GM12878 (cell line): ENCODE measurements at regions of chr7 and their contacts with region 1.

Region 1: DNA sequence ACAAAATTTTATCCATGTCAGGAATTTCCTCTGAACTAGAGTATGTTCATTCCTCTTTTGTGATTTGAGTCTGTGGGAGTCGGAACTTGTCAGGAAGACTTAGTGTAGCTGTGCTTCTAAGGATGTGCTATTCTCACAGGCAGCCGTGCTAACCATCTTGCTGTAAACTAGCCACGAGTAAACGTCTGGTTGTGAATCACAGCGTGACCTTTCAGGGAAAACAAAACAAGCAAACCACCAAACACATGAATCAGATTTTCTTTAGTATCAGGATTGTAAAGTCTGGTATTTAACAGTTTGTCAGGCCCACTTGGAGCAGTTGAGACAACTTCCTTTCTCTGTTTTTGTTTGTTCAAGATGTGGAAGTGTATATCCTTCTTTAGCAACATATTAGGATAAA is 32.0 kb downstream of the AUTS2 start:
- DNase-seq: no peak
- ATAC-seq: peak; percentile 72
- H3K4me3 ChIP-seq: no peak overlapping the region
- H3K27ac ChIP-seq: no peak overlapping the region
- H3K4me1 ChIP-seq: no peaks in the 10 kb centered on the region
- H3K27me3 ChIP-seq: no peaks in the 10 kb centered on the region
- CTCF ChIP-seq: no peak
- EP300 ChIP-seq: no peak
- POLR2A ChIP-seq: no peak
- RAD21 ChIP-seq: no peak

Region 2: DNA sequence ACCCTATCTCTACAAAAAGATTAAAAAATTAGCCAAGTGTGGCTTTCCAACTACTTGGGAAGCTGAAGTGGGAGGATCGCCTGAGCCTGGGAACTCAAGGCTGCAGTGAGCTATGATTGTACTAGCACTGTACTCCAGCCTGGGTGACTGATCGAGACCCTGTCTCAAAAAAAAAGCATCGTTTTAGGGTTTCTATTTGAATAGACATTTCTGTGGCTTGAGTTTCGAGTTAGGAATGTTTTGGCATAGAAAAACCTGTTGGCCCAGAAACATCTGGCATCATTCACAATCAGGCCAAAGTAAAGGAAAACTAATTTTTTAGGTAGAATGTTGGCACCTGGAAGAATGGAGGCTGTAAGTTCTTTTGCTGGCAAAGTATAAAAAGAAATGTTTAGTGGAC is 40.4 kb after region 1 on chr7:
- CTCF ChIA-PET with region 1: no interaction called
- POLR2A ChIA-PET with region 1: interaction called, 12 read pairs
- RAD21 ChIA-PET with region 1: no interaction called
- SMC1A ChIA-PET with region 1: no interaction called
- in situ Hi-C with region 1: no loop called
- intact Hi-C with region 1: no loop called
- DNase-seq: no peak
- ATAC-seq: peak; percentile 13; the same call in 1 of the 3 replicates
- H3K4me3 ChIP-seq: no peak overlapping the region
- H3K27ac ChIP-seq: no peak overlapping the region
- H3K4me1 ChIP-seq: peaks cover 27% of the 10 kb centered on the region
- H3K27me3 ChIP-seq: no peaks in the 10 kb centered on the region
- CTCF ChIP-seq: no peak
- EP300 ChIP-seq: no peak
- POLR2A ChIP-seq: no peak
- RAD21 ChIP-seq: no peak

Region 3: DNA sequence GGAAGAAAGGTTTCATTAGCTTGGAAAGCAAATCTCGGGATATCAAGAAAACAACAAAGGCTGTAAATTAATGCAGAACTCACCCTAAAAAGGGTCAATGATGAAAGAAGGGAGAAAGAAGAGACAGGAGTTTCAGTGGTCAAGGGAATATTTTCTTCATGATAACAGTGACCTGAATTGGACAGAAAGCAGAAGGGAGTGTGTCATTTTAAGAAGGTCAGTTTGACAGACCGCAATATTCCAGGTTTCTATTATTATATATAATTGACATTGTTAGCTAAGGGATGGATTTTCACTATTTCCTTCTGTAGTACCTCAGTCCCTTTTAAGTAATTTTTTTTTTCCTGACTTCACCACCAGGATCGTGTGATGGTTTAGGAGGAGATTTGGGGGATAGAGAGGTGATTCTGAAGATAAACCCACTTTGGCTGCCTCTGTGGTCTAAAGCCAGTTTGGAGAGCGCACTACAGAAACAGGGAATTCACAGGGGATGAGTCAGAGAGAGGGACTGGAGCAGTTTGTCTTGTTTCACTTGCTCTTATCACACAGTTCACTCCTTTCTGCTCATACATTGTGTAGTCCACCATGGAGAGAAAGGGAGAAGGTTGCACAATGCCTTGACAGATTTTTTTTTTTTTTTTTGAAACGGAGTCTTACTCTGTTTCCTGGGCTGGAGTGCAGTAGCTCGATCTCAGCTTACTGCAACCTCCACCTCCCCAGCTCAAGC is 385.9 kb after region 1 on chr7:
- CTCF ChIA-PET with region 1: no interaction called
- POLR2A ChIA-PET with region 1: no interaction called
- RAD21 ChIA-PET with region 1: no interaction called
- SMC1A ChIA-PET with region 1: no interaction called
- in situ Hi-C with region 1: no loop called
- intact Hi-C with region 1: no loop called
- DNase-seq: no peak
- ATAC-seq: peak; percentile 67
- H3K4me3 ChIP-seq: no peak overlapping the region
- H3K27ac ChIP-seq: no peak overlapping the region
- H3K4me1 ChIP-seq: peaks cover 4% of the 10 kb centered on the region; the same call in 1 of the 2 replicates
- H3K27me3 ChIP-seq: no peaks in the 10 kb centered on the region
- CTCF ChIP-seq: no peak
- EP300 ChIP-seq: no peak
- POLR2A ChIP-seq: no peak
- RAD21 ChIP-seq: no peak